Posterior vena cava (tissue), 2 donors: ENCODE measurements at regions of chr15 and their contacts with region 1.

Region 1: DNA sequence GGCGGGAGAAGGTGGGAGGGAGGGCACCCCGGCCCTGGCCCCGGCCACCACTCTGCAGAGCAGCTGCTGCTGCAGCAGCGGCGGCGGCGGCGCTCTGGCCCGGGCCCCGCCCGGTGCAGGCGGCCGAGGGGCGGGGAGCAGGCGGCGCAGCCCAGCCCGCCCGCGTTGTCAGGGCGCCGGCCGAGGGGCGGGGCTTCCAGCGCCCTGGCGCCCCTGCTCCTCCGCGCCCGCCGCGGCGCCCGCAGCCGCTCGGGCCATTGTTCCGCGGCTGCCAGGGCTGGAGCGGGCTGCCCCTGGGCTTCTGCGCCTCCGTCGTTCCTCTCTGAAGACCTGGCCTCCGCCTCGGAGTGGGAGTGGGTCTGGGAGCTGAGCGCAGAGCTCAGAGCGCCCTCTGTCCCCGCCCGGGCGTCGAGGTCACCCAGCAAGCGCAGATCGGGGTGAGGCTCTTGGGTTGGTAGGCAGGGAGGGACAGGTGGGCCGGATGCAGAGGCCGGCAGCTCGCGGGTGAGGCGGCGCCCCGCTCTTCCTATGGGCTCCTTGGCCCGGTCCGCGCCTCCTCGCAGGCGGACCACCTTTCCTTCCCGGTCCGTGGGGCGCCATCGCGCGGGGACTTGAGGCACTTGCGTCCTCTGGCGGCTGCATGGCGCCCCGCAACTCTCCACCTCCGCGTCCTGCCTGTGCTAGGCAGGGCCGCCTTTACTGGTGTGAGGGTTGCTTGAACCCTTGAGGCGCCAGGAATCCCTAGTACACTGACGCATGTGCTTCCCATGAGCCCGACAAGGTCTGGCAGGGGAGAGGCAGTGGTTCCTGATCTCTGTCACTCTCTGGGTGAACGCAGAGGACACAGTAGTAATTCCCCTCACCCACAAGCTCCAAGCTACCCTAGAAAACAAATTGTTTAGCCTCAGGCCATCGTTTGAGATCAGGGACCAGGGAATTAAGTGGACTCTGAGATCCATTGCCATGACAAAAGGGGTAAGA is at the start of gene LPCAT4:
- DNase-seq: peak; percentile 97
- total RNA-seq, gene LPCAT4: 26.7 to 35.4 TPM

Region 2: DNA sequence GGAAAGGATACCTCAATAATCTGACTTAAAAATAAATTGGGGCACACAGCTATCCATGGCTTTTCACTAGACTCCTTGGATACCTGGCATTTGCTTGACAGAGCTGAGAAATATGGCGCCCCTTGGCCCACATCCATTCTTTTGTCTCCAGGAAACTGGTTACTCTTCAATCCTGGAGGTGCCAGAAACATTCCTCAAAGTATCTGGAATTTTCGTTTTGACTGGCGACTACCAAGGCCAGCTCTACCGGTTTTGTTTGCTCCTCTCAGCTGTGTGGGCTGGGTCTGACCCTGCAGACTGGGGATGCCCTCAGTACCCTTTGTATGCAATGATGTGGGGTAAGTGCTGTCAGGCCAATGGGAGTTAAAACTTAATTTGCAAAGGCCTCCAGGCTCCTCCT is 184.4 kb before region 1 on chr15:
- intact Hi-C with region 1: no loop called
- DNase-seq: no peak

Region 3: GRCh38 chr15:34241372-34242330 is 125.7 kb before region 1 on chr15:
- intact Hi-C with region 1: loop called in 1 of 2 experiments (anchors 10 kb)
- DNase-seq: no peak

Region 4: DNA sequence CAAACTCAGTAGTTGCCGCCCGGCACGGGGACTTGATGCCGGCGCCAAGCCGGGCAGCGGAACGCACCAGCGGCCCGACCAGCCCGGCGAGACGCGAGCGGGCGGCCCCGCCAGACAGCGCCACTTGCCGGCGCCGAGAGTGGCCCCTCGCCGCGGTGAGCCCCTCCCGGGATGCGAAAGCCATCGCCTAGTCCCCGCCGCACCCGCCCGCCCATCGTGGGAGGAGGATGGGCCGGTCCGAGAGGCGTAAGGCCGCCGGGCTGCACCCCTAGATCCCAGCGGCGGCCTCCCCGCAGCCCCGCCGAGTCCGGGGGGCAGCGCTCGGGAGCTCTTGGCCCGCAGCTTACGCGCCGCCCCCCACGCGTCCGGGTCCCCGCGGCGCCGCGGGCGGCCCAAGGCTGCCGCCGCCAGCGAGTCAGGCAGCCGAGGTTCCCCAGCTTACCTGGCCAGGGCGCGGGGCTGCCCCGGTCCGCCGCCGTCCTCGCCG is 69.6 kb after region 1 on chr15:
- intact Hi-C with region 1: no loop called
- DNase-seq: no peak

Region 5: DNA sequence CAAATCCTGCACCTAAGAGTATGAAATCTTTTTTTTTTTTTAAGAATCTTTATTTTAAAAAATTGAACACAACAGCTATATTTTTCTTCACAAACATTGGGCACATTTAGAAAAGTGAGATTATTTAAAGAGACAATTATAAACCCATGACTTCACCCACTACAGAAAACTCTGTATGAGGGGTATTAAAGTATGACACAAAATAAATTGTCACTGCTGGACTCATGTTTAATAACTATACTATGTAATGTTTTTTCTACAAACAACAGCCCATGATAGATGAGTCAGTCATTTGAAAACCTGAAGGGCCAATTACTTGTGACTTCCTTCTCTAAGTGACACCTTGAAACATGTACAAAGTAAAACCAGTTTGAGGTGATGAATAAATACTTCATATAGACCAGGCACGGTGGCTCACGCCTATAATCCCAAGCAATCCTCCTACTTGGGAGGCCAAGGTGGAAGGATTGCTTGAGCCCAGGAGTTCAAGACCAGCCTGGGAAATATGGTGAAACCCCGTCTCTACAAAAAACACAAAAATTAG is 566.1 kb after region 1 on chr15:
- intact Hi-C with region 1: no loop called
- DNase-seq: no peak